Ascending aorta (tissue), 2 donors: ENCODE measurements at regions of chr11 and their contacts with region 1.

Region 1: DNA sequence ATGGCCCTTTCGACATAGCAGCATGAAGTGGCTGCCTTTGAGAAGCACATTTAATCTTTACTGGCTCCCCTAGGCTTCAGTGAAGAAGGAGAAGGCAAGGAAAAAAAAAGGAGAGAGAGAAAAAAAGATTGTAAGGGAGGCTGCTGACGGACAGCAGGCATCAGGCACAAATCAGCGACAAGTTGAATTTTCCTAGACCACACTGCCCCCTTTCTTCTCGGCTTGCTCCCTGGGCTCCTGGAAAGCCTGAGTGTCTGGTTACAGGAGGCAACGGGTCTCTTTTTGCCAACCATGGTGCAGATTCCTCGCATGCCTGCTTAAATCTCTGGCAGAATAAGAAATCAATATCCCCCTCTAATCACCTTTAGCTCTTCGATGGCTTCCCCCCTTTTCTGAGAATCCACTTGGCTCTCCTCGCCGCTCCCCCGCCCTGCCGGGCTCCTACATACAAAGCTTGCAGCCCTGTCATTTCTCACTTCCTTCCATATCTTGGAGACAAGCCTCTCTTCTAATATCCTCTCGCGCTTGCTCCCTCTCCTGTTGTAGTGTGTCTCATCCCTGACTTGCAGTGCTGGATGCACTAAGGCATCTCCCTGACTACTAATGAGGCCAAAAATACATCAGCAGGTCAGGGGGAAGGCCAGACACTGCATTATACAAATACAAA is 14.3 kb downstream of the BLID start:
- DNase-seq: peak in 1 of 2 donors; percentile 86
- H3K4me3 ChIP-seq: peak overlapping the region; percentile 71 to 77
- H3K27ac ChIP-seq: peak overlapping the region; percentile 91
- H3K4me1 ChIP-seq: peaks cover 3 to 25% of the 10 kb centered on the region in 2 donors
- H3K27me3 ChIP-seq: no peaks in the 10 kb centered on the region
- CTCF ChIP-seq: peak; percentile 60 to 80 (median 72)

Region 2: DNA sequence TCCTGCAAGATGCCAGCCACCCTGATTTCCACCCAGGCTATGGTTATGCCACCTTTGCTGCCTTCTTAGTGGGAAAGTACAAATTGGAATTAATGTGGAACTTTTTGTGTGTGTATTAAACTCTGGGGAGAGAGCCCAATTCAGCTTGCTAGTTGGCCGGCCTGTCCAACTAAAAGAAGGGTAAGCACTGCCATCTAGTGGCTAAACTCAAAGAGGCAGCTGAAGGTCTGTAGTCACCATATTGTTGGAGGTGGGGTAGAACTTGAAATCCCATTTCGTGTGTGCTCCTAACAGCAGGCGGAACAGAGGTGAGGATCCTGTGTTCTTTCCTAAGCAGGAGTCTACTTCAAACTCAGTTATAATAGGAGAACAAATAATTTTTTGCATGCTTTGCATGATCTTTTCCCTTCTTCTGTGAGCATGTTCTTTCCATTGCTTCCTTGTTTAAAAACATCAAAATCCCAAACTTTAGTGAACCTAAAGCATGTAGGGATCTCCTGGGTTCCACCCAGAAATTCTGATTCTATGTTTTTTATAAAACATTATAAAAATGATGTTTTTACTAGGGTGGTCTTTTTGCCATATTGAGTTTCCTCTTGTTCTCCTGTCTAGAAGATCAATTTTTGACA is 510.2 kb before region 1 on chr11:
- intact Hi-C with region 1: loop called (anchors 5 kb)
- DNase-seq: peak in 1 of 2 donors; percentile 85
- H3K4me3 ChIP-seq: no peak overlapping the region
- H3K27ac ChIP-seq: no peak overlapping the region
- H3K4me1 ChIP-seq: peaks cover 5 to 11% of the 10 kb centered on the region in 2 donors
- H3K27me3 ChIP-seq: no peaks in the 10 kb centered on the region
- CTCF ChIP-seq: peak; percentile 68 to 86 (median 84)

Region 3: DNA sequence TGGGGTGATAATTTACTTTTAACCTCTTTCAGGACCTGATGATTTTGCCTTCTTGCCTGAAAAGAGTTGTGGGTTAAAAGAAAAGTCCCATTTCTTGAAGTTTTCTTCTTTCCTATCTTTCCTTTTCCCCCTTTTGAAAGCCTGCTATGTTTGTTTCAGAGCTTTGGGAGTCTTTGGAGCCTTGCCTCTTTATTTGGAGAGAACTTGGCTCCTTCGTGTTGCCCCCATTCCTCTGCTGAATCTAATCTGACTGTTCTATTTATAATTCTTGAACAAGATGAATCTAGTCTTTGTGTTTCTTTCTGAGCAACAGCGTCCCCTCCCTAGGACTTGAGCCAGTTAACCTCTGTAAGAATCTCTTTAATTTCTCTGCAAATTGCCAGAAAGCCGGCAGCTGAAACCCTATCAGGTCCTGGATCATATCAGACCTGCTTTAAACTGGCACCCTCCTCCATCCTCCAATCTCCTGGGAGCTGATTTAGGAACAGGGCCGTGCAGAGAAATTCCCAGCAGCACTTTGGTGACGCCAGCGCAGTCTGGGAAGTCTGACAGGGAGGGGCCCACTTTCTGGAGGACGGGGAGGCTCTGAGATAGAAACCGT is 359.9 kb before region 1 on chr11:
- intact Hi-C with region 1: loop called (anchors 5 kb)
- DNase-seq: peak; percentile 26 to 95
- H3K4me3 ChIP-seq: peak overlapping the region; percentile 7 to 21
- H3K27ac ChIP-seq: peak overlapping the region; percentile 83 to 90
- H3K4me1 ChIP-seq: peaks cover 9 to 19% of the 10 kb centered on the region in 2 donors
- H3K27me3 ChIP-seq: no peaks in the 10 kb centered on the region
- CTCF ChIP-seq: no peak

Region 4: DNA sequence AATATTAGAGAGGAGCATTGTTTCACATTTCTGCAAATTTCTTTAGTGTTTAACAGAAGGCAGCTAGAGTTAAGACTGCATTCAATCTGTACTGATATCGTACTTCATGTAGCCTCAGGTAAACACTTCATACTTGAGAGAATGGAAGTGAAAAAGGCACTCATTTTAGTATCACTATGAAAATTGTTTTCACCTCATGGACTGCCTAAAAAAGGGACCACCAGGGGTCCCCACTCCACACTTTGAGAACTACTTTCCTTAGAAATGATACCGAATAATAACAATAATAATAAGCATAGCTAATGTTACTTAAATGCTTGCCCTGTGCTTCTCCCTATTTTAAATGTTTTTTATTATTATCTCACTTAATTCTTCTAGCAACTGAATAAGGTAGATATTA is 80.9 kb before region 1 on chr11:
- intact Hi-C with region 1: loop called (anchors 1 kb)
- DNase-seq: no peak
- H3K4me3 ChIP-seq: no peak overlapping the region
- H3K27ac ChIP-seq: no peak overlapping the region
- H3K4me1 ChIP-seq: peaks cover 0 to 3% of the 10 kb centered on the region in 2 donors
- H3K27me3 ChIP-seq: no peaks in the 10 kb centered on the region
- CTCF ChIP-seq: peak; percentile 32 to 50 (median 40)

Region 5: DNA sequence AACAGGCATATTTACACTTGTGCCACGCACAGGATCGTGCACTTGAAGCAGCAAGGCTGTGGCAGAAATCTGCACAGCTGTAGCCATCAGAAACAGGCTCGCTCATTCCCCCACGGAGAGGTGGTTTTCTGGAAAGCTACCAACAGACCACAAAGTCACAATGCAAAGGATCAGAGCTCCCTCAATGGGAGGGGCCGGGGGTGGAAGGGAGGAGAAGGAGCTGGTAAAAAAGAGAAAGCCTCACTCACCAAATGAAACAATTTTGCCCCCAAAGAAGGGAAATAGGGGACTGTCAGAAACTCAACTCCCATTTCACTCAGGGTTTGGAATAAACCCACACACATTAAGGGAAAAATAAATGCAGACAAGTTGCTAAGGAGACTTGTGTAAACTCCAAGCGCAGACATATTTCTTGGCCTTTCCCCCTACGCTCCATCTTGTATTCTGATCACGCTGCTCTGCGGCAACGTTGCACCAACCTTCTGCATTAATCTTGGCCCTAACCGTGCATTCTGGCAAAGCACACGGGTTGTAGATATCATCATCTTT is 57.5 kb after region 1 on chr11:
- intact Hi-C with region 1: loop called (anchors 2 kb)
- DNase-seq: no peak
- H3K4me3 ChIP-seq: peak overlapping the region; percentile 32 to 62
- H3K27ac ChIP-seq: peak overlapping the region; percentile 80 to 94
- H3K4me1 ChIP-seq: peaks cover 11 to 38% of the 10 kb centered on the region in 2 donors
- H3K27me3 ChIP-seq: no peaks in the 10 kb centered on the region
- CTCF ChIP-seq: no peak

Region 6: DNA sequence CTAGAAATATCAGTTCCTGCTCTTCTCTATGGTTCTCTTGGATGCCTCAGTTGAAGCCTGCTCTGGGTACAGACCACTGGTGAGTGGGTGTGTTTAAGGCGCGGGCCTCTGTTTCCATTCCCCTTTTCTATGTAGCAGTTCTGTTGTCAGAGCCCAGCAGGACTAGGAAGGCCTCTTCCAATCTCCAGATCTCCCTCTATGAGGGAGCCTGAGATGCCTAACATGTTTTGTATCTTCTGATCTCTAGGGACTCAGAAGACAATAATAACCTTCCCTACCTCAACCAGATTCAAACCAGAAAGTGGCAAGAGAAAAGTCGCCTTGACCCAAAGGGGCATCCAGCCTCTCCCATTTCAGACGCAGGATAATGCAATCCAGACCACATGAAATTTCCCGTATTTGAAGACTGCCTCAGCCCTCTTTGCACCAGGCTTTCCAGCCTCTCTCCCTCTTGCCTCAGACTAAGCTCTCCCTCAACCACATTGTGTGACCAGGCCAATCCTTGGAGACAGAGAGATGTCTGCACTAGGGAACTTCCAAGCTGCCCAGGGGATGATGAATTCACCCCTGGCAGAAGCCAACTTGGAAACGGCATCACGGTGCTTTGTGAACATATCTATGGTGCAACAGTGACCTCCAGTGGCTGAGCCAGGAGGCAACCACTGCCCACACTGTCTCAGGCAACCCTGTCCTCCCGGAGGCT is 403.7 kb after region 1 on chr11:
- intact Hi-C with region 1: loop called (anchors 2 kb)
- DNase-seq: peak; percentile 38 to 93
- H3K4me3 ChIP-seq: no peak overlapping the region
- H3K27ac ChIP-seq: peak overlapping the region in 1 of 2 donors; percentile 38
- H3K4me1 ChIP-seq: peaks cover 4 to 6% of the 10 kb centered on the region in 2 donors
- H3K27me3 ChIP-seq: no peaks in the 10 kb centered on the region
- CTCF ChIP-seq: peak; percentile 85 to 90 (median 88)